B cell (primary cell): ENCODE measurements at regions of chr6 and their contacts with region 1.

Region 1: GRCh38 chr6:107866606-107867301 is 42.6 kb upstream of the SCML4 start:
- DNase-seq: peak; percentile 62
- ATAC-seq: peak; percentile 24
- H3K4me3 ChIP-seq: peak overlapping the region in 3 of 5 experiments; percentile 22 to 37 (median 30)
- H3K4me3 Mint-ChIP-seq: peak overlapping the region; percentile 39
- H3K27ac ChIP-seq: no peak overlapping the region
- H3K27ac Mint-ChIP-seq: no peak overlapping the region
- H3K4me1 ChIP-seq: peaks cover 28 to 30% of the 10 kb centered on the region in 2 donors
- H3K4me1 Mint-ChIP-seq: peaks cover 43% of the 10 kb centered on the region
- H3K27me3 ChIP-seq: no peaks in the 10 kb centered on the region
- H3K27me3 Mint-ChIP-seq: peaks cover 3% of the 10 kb centered on the region
- CTCF ChIP-seq: peak; percentile 80

Region 2: GRCh38 chr6:107894821-107895396 is 28.2 kb after region 1 on chr6:
- CTCF ChIA-PET with region 1: interaction called, 23 read pairs
- POLR2A ChIA-PET with region 1: no interaction called
- intact Hi-C with region 1: loop called (anchors 2 kb)
- DNase-seq: peak; percentile 77
- ATAC-seq: peak; percentile 80
- H3K4me3 ChIP-seq: peak overlapping the region in 1 of 5 experiments; percentile 27
- H3K4me3 Mint-ChIP-seq: peak overlapping the region; percentile 48
- H3K27ac ChIP-seq: peak overlapping the region; percentile 75 to 76
- H3K27ac Mint-ChIP-seq: peak overlapping the region; percentile 96
- H3K4me1 ChIP-seq: peaks cover 49 to 53% of the 10 kb centered on the region in 2 donors
- H3K4me1 Mint-ChIP-seq: peaks cover 55% of the 10 kb centered on the region
- H3K27me3 ChIP-seq: no peaks in the 10 kb centered on the region
- H3K27me3 Mint-ChIP-seq: no peaks in the 10 kb centered on the region
- CTCF ChIP-seq: no peak